ENCODE measurements at regions of chr12 and their contacts with region 1.

Region 1: GRCh38 chr12:5140190-5140589 is 96.5 kb downstream of the KCNA5 start:
- DNase-seq: no peak
- ATAC-seq: no peak
- H3K4me3 ChIP-seq: no peak overlapping the region
- H3K27ac ChIP-seq: no peak overlapping the region
- H3K4me1 ChIP-seq: no peaks in the 10 kb centered on the region
- H3K27me3 ChIP-seq: peaks cover 0 to 2% (median 0%) of the 10 kb centered on the region in 9 donors
- CTCF ChIP-seq: no peak
- POLR2A ChIP-seq: no peak

Region 2: DNA sequence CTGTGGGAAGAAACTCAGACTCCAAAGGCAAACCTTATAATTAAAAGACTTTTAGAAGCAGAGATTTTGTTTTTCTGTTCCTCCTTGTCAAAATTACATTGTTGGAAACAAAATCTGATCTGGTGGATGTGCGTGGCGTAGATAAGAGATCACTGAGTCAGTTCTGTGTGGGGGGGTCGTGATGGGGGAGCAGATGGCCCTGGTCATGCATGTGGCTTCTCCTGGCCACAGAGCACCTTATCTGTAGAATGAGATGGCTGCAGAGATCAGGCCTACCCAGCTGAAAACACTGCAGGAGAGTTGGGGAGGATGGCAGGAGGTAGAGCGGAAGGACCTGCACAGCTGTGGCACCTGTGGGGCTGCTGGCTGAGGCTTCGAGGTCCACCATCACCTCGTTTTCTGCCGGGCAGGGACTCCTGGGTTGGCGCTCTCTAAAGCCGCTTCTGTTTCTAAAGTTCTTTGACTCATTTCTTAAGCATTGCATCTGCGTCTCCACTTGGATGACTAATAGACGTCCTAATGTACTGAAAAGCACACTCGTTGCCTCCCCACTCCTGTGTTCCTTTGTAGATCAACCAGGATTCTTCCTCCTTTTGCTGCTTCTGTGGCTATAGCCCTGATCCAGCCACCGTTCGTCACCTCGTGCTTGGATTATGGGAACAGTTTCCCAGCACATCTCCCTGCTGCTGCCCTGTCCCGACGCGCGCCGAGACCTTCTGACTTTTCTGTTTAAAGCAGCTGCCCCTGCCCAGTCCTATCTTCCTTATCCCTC is 1969.6 kb before region 1 on chr12:
- intact Hi-C with region 1: loop called in 1 of 10 experiments (anchors 10 kb)
- DNase-seq: no peak
- ATAC-seq: no peak
- H3K4me3 ChIP-seq: no peak overlapping the region
- H3K27ac ChIP-seq: no peak overlapping the region
- H3K4me1 ChIP-seq: peaks cover 0 to 45% (median 10%) of the 10 kb centered on the region in 12 donors
- H3K27me3 ChIP-seq: no peaks in the 10 kb centered on the region
- CTCF ChIP-seq: no peak
- POLR2A ChIP-seq: no peak

Region 3: GRCh38 chr12:4743046-4743445 is 397.1 kb before region 1 on chr12:
- intact Hi-C with region 1: no loop called
- DNase-seq: no peak
- ATAC-seq: no peak
- H3K4me3 ChIP-seq: no peak overlapping the region
- H3K27ac ChIP-seq: no peak overlapping the region
- H3K4me1 ChIP-seq: peaks cover 0 to 17% (median 0%) of the 10 kb centered on the region in 12 donors
- H3K27me3 ChIP-seq: peaks cover 0 to 3% (median 0%) of the 10 kb centered on the region in 9 donors
- CTCF ChIP-seq: no peak
- POLR2A ChIP-seq: no peak

Measured in heart left ventricle (tissue), 16 donors.